Activated CD8-positive, alpha-beta T cell treated with anti-CD3 and anti-CD28 coated beads, Interleukin-2, amount 10 ng/mL, durations not matched to agents 7 days and 5 days (primary cell): ENCODE measurements at regions of chr5 and their contacts with region 1.

Region 1: GRCh38 chr5:158695595-158696330 is 404.0 kb downstream of the EBF1 start:
- DNase-seq: peak; percentile 74
- ATAC-seq: peak; percentile 85
- H3K4me3 Mint-ChIP-seq: no peak overlapping the region
- H3K27ac Mint-ChIP-seq: no peak overlapping the region
- H3K4me1 Mint-ChIP-seq: no peaks in the 10 kb centered on the region
- H3K27me3 Mint-ChIP-seq: peaks cover 3% of the 10 kb centered on the region

Region 2: DNA sequence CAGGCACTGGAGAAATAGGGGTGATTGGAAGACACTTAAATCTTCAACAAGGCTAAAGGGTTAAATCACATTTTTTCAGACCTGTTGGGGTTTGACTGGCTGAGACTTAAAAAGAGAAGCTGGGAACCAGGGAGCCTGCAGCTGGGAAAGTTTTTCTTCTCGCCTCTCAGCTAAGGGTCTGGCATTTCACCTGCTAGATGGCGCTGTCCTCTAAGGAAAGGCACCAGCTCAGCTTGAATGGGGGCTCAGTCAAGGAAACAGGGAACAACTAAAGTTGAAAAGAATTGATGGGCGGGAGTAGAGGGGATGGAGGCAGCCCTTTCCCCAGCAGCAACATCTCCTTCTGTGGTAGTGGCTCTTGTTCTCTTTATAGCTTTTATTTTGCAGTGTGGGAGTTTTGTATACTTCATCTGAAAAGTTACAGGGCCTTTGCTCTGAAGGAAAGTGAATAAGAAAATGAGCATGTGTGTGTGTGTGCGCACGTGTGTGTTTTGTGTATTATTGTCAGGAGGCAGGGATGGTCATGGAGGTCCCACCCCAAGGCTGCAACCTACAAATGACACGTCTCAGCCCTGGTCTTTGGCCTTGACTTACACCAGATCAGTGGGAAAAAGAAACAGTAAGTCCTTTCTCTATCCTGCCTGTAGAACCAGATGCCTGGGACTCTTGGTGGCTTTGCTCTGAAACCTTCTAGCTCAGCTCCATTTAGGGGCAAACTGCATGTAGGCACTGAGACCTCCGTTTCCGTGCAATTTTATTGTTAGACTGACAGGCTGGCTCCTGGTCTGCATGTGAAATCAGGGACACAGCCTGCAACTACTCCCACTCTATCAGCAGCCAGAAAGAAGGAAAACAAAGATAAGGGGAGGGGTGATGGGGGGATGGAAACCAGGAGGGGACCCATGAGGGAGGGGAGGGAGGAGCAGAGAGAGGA is 520.6 kb before region 1 on chr5:
- CTCF ChIA-PET with region 1: interaction called, 32 read pairs
- POLR2A ChIA-PET with region 1: no interaction called
- DNase-seq: peak; percentile 69
- ATAC-seq: peak; percentile 64
- H3K4me3 Mint-ChIP-seq: no peak overlapping the region
- H3K27ac Mint-ChIP-seq: no peak overlapping the region
- H3K4me1 Mint-ChIP-seq: no peaks in the 10 kb centered on the region
- H3K27me3 Mint-ChIP-seq: no peaks in the 10 kb centered on the region

Region 3: DNA sequence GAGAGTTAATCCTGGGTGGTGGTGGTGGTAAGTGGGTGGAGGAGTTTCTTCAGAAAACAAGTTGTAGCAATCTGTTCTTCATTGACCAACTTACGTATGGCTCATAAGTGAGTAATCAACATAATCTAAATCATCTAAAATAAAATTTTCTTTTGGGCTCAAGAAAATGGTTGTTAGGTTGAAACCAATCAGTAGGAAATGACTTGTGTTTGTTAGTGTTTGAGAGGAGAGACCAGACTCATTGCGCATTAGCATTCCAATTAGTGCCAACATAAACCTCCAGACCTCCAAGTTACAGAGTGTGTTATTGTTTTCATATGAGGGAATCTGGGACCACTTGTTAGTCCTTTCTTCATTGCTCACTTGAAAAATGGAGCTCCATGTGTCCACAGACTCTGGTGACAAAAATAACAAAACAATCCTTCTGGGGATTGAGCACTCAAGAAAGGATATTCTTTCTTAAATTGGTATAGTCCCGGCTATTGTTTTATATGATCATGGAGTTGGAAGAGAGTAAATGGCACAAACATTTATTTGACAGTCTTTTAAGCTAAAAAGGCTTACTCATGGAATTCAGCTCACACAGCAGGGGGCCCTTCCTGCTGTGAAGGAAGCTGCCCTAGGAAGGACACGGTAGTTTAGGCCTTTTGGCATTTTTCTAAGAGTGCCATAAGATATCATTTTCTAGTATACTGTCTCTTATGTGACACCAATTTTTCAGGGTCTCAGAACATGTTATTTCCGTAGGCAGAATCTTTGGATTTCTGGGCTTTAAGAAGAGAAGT is 37.1 kb before region 1 on chr5:
- CTCF ChIA-PET with region 1: no interaction called
- POLR2A ChIA-PET with region 1: no interaction called
- DNase-seq: no peak
- ATAC-seq: no peak
- H3K4me3 Mint-ChIP-seq: no peak overlapping the region
- H3K27ac Mint-ChIP-seq: no peak overlapping the region
- H3K4me1 Mint-ChIP-seq: no peaks in the 10 kb centered on the region
- H3K27me3 Mint-ChIP-seq: no peaks in the 10 kb centered on the region

Region 4: DNA sequence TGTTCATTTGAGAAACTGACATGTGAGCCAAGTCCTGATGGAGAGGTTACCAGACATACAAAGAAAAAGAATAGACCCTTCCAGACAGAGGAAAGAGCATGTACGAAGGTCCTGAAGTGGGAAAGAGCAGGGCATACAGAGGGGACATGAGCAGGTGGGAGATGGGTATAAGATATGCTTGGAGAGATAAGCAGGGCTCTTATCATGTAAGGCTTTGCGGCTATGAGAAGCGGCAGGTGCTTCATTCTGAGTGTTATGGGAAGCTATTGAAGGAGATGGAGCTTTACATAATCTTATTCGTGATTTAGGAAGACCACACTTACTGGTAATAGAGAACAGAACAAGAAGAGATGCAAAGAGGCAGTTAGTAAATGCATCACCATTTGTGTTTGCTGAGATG is 13.1 kb before region 1 on chr5:
- CTCF ChIA-PET with region 1: interaction called, 20 read pairs
- POLR2A ChIA-PET with region 1: no interaction called
- DNase-seq: no peak
- ATAC-seq: no peak
- H3K4me3 Mint-ChIP-seq: no peak overlapping the region
- H3K27ac Mint-ChIP-seq: no peak overlapping the region
- H3K4me1 Mint-ChIP-seq: no peaks in the 10 kb centered on the region
- H3K27me3 Mint-ChIP-seq: peaks cover 3% of the 10 kb centered on the region

Region 5: GRCh38 chr5:158837908-158838307 is 142.1 kb after region 1 on chr5:
- CTCF ChIA-PET with region 1: no interaction called
- POLR2A ChIA-PET with region 1: no interaction called
- DNase-seq: no peak
- ATAC-seq: no peak
- H3K4me3 Mint-ChIP-seq: no peak overlapping the region
- H3K27ac Mint-ChIP-seq: no peak overlapping the region
- H3K4me1 Mint-ChIP-seq: no peaks in the 10 kb centered on the region
- H3K27me3 Mint-ChIP-seq: peaks cover 8% of the 10 kb centered on the region

Region 6: GRCh38 chr5:158940977-158941376 is 245.2 kb after region 1 on chr5:
- CTCF ChIA-PET with region 1: no interaction called
- POLR2A ChIA-PET with region 1: no interaction called
- DNase-seq: no peak
- ATAC-seq: no peak
- H3K4me3 Mint-ChIP-seq: no peak overlapping the region
- H3K27ac Mint-ChIP-seq: no peak overlapping the region
- H3K4me1 Mint-ChIP-seq: no peaks in the 10 kb centered on the region
- H3K27me3 Mint-ChIP-seq: peaks cover 3% of the 10 kb centered on the region

Region 7: DNA sequence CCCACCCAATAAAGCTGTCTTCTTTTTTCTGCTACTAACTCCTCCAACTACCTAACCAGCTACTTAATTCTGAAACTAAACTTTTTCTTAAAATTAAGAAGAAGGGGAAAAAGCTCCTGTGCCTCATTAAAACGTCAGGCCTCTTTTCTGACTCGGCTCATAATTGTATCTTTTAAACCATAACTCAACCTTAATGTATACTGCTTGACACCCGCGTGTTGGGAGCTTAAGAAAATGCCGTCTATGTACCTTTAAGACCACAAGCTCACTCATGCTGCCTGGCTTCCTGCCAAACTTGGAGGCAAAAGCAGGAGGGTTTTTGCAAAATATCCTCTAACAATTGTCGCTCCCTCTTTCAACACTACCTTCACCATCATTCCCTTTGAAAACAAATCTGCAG is 399.0 kb after region 1 on chr5:
- CTCF ChIA-PET with region 1: interaction called, 11 read pairs
- POLR2A ChIA-PET with region 1: no interaction called
- DNase-seq: peak; percentile 77
- ATAC-seq: no peak
- H3K4me3 Mint-ChIP-seq: no peak overlapping the region
- H3K27ac Mint-ChIP-seq: no peak overlapping the region
- H3K4me1 Mint-ChIP-seq: peaks cover 31% of the 10 kb centered on the region
- H3K27me3 Mint-ChIP-seq: peaks cover 34% of the 10 kb centered on the region

Region 8: DNA sequence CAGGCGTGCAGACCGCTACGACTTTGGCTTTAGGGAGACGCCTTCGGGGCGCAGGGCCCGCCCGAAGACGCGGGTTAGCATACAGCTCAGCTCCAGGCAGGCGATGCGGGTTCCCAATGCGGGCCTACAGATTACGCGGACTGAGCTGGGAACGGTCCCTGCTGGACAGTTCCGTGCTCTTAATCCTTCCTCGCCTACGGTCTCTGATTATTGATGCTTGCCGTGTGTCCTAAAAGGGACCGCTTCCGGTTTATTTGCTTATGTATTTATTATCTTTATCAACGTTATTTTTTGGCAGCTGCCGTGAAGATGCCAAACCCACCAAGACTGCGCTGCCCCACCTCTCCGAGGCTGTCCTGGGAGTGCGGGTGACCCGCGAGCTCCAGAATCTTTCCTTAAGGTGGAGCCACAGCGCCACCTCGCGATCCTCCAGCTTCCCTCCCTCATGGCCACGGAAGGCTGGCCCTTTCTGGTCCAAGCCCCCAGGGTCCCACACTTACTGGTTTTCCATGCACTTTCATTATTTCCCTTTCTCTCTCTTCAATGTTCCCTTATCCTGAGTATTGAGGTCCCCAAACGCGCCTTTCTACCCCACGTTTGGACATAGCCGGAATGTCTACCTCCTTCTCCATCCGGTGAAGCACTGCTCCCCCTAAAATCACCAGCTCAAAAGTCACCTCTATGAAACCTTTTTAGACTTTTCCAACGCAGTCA is 411.0 kb after region 1 on chr5:
- CTCF ChIA-PET with region 1: interaction called, 173 read pairs
- POLR2A ChIA-PET with region 1: interaction called, 5 read pairs
- DNase-seq: peak; percentile 73
- ATAC-seq: peak; percentile 90
- H3K4me3 Mint-ChIP-seq: peak overlapping the region; percentile 66
- H3K27ac Mint-ChIP-seq: no peak overlapping the region
- H3K4me1 Mint-ChIP-seq: peaks cover 19% of the 10 kb centered on the region
- H3K27me3 Mint-ChIP-seq: peaks cover 65% of the 10 kb centered on the region

Region 9: DNA sequence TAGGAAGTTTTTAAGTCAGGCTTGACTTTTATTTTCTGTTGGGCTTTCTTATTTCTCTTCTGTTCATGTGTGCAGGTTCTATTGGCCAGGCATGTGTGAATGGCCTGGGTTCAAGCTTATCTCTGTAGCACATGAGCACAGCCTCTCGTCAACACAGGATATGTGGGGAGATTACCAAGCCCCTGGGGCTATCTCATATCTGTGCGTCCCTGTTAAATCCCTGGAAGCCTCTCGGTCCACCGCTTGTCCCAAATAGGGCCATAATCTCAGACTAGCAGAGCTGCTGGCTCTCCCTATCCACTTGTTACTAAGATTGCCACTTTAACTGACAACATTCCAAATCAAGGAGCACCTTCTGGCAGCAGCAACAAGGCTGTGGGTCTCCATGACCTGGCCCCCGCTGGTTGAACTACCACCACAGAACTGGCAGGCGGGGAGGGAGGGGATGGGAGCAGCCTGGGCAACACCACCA is 432.3 kb after region 1 on chr5:
- CTCF ChIA-PET with region 1: interaction called, 45 read pairs
- POLR2A ChIA-PET with region 1: no interaction called
- DNase-seq: no peak
- ATAC-seq: no peak
- H3K4me3 Mint-ChIP-seq: no peak overlapping the region
- H3K27ac Mint-ChIP-seq: no peak overlapping the region
- H3K4me1 Mint-ChIP-seq: no peaks in the 10 kb centered on the region
- H3K27me3 Mint-ChIP-seq: peaks cover 10% of the 10 kb centered on the region